Naive thymus-derived CD4-positive, alpha-beta T cell (primary cell): ENCODE measurements at regions of chr1 and their contacts with region 1.

Region 1: GRCh38 chr1:240732390-240732789 is 120.4 kb upstream of the GREM2 start:
- DNase-seq: peak in 1 of 9 donors; percentile 2
- ATAC-seq: peak; percentile 38
- H3K4me3 ChIP-seq: no peak overlapping the region
- H3K4me3 Mint-ChIP-seq: no peak overlapping the region
- H3K27ac ChIP-seq: no peak overlapping the region
- H3K27ac Mint-ChIP-seq: no peak overlapping the region
- H3K4me1 ChIP-seq: no peaks in the 10 kb centered on the region
- H3K4me1 Mint-ChIP-seq: no peaks in the 10 kb centered on the region
- H3K27me3 ChIP-seq: no peaks in the 10 kb centered on the region
- H3K27me3 Mint-ChIP-seq: peaks cover 0 to 6% (median 4%) of the 10 kb centered on the region in 5 donors

Region 2: GRCh38 chr1:240917976-240918375 is 185.6 kb after region 1 on chr1:
- CTCF ChIA-PET with region 1: no interaction called
- POLR2A ChIA-PET with region 1: no interaction called
- intact Hi-C with region 1: no loop called
- DNase-seq: no peak
- ATAC-seq: no peak
- H3K4me3 ChIP-seq: no peak overlapping the region
- H3K4me3 Mint-ChIP-seq: no peak overlapping the region
- H3K27ac ChIP-seq: no peak overlapping the region
- H3K27ac Mint-ChIP-seq: no peak overlapping the region
- H3K4me1 ChIP-seq: no peaks in the 10 kb centered on the region
- H3K4me1 Mint-ChIP-seq: no peaks in the 10 kb centered on the region
- H3K27me3 ChIP-seq: no peaks in the 10 kb centered on the region
- H3K27me3 Mint-ChIP-seq: no peaks in the 10 kb centered on the region

Region 3: DNA sequence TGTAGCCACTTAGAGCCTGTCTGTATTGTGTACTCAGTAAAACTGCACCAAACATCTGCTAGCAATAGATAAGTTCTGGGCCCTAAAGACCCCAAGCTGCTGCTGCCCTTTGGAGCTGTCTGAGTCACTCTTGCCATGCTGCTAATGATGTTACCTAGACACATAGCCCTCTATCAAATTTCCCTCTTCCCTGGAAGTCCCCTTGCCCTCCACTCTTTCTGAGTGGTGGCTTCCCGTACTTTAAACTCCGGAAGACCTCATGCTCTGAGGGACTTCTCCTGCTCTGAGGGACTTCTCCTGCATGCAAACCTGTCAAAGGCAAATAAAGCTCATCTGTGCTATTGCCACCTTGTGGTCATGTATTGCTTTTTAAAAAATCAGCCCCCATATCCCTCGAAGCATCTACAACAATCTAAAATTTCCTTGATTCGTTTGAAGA is 753.2 kb after region 1 on chr1:
- CTCF ChIA-PET with region 1: no interaction called
- POLR2A ChIA-PET with region 1: no interaction called
- intact Hi-C with region 1: loop called in 1 of 2 experiments (anchors 10 kb)
- DNase-seq: no peak
- ATAC-seq: no peak
- H3K4me3 ChIP-seq: no peak overlapping the region
- H3K4me3 Mint-ChIP-seq: no peak overlapping the region
- H3K27ac ChIP-seq: no peak overlapping the region
- H3K27ac Mint-ChIP-seq: peak overlapping the region in 1 of 9 donors; percentile 24
- H3K4me1 ChIP-seq: no peaks in the 10 kb centered on the region
- H3K4me1 Mint-ChIP-seq: peaks cover 0 to 2% (median 0%) of the 10 kb centered on the region in 7 donors
- H3K27me3 ChIP-seq: no peaks in the 10 kb centered on the region
- H3K27me3 Mint-ChIP-seq: peaks cover 0 to 13% (median 3%) of the 10 kb centered on the region in 5 donors

Region 4: GRCh38 chr1:241499910-241500309 is 767.5 kb after region 1 on chr1:
- CTCF ChIA-PET with region 1: no interaction called
- POLR2A ChIA-PET with region 1: no interaction called
- intact Hi-C with region 1: loop called in 1 of 2 experiments (anchors 5 kb)
- DNase-seq: no peak
- ATAC-seq: no peak
- H3K4me3 ChIP-seq: no peak overlapping the region
- H3K4me3 Mint-ChIP-seq: no peak overlapping the region
- H3K27ac ChIP-seq: no peak overlapping the region
- H3K27ac Mint-ChIP-seq: no peak overlapping the region
- H3K4me1 ChIP-seq: no peaks in the 10 kb centered on the region
- H3K4me1 Mint-ChIP-seq: peaks cover 0 to 9% (median 0%) of the 10 kb centered on the region in 7 donors
- H3K27me3 ChIP-seq: no peaks in the 10 kb centered on the region
- H3K27me3 Mint-ChIP-seq: no peaks in the 10 kb centered on the region